WTC11 (cell line): ENCODE measurements at regions of chr13 and their contacts with region 1.

Region 1: GRCh38 chr13:99600318-99600717 is 99.0 kb downstream of the TM9SF2 start:
- DNase-seq: peak; percentile 77
- ATAC-seq: peak; percentile 99
- H3K4me3 Mint-ChIP-seq: no peak overlapping the region
- H3K27ac Mint-ChIP-seq: no peak overlapping the region
- H3K4me1 Mint-ChIP-seq: peaks cover 19% of the 10 kb centered on the region
- H3K27me3 Mint-ChIP-seq: no peaks in the 10 kb centered on the region
- CTCF ChIP-seq: peak; percentile 45; the same call in 1 of the 2 replicates

Region 2: DNA sequence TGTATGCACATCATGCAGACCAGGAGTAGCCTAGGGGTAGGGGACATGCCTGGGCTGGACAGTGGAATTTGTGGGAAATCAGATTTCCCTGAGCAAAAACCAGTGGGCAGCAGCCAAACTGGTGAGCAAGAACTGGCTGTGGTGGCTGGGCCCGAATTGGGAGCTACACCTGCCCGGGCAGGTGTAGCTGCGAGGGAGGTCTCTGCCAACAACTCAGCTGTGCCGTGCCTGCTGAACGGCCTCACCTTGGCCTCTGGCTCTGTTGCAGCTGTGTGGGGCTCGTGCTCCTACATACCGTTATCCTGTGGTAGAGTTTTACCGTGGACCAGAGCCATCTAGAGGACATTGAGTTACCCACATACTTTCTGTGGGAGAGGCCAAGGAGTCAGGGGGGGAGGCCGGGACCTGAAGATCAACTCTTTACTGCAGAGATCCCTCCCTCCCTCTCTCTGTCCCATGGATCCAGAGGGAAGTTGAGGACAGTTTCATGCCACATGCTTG is 14.1 kb after region 1 on chr13:
- CTCF ChIA-PET with region 1: interaction called, 22 read pairs
- POLR2A ChIA-PET with region 1: no interaction called
- DNase-seq: peak; percentile 44
- ATAC-seq: peak; percentile 81
- H3K4me3 Mint-ChIP-seq: no peak overlapping the region
- H3K27ac Mint-ChIP-seq: no peak overlapping the region
- H3K4me1 Mint-ChIP-seq: peaks cover 46% of the 10 kb centered on the region
- H3K27me3 Mint-ChIP-seq: no peaks in the 10 kb centered on the region
- CTCF ChIP-seq: no peak

Region 3: GRCh38 chr13:99636728-99637353 is 36.5 kb after region 1 on chr13:
- CTCF ChIA-PET with region 1: no interaction called
- POLR2A ChIA-PET with region 1: no interaction called
- DNase-seq: no peak
- ATAC-seq: no peak
- H3K4me3 Mint-ChIP-seq: no peak overlapping the region
- H3K27ac Mint-ChIP-seq: no peak overlapping the region
- H3K4me1 Mint-ChIP-seq: peaks cover 3% of the 10 kb centered on the region
- H3K27me3 Mint-ChIP-seq: no peaks in the 10 kb centered on the region
- CTCF ChIP-seq: no peak

Region 4: GRCh38 chr13:99677116-99677951 is 77.0 kb after region 1 on chr13:
- CTCF ChIA-PET with region 1: no interaction called
- POLR2A ChIA-PET with region 1: no interaction called
- DNase-seq: no peak
- ATAC-seq: no peak
- H3K4me3 Mint-ChIP-seq: no peak overlapping the region
- H3K27ac Mint-ChIP-seq: peak overlapping the region; percentile 43; the same call in 1 of the 2 replicates
- H3K4me1 Mint-ChIP-seq: peaks cover 50% of the 10 kb centered on the region
- H3K27me3 Mint-ChIP-seq: no peaks in the 10 kb centered on the region
- CTCF ChIP-seq: no peak